ENCODE measurements at regions of chr4 and their contacts with region 1.

Region 1: DNA sequence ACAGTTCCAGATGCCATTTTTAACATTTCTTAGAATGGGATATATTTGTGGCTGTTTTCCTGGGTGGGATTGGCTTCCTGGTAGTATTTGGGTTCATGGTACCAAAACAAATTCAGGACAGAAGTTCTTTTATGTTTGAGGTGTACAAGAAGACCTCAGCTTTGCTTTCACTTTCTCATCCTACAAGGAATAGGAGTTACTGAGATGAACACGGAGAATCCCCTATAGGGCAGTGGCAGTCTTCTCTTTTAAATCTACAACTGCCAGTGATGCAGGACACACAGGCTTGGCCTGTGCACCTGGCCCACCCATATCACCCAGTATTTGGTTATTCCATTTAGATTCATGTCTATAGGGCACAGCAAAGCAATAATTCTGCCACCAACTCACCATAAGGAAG is 35.2 kb downstream of the SLC10A7 start:
- DNase-seq: peak; percentile 34
- CTCF ChIP-seq: no peak

Region 2: GRCh38 chr4:146349306-146349705 is 137.3 kb before region 1 on chr4:
- CTCF ChIA-PET with region 1: no interaction called
- POLR2A ChIA-PET with region 1: no interaction called
- DNase-seq: no peak
- CTCF ChIP-seq: no peak

Region 3: GRCh38 chr4:146465628-146466027 is 20.9 kb before region 1 on chr4:
- CTCF ChIA-PET with region 1: interaction called, 10 read pairs
- POLR2A ChIA-PET with region 1: no interaction called
- DNase-seq: no peak
- CTCF ChIP-seq: no peak

Region 4: DNA sequence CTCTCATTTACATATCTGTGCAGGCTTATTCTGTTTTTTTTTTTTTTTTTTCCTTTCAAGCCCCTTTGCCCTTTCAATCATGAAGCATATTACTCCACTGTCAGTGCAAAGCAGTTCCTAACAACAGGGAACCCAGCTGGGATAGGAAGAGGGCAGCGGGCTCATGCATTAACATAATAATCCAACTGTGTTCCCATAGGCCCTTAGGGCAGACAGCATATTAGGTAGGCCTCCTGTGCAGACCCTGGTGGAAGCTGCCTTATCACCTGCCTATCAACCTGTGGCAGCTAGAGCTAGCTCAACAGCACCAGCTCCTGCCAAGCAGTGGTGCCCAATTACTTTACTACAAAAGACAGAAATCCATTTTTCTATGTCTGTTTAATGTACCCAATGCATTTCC is 14.2 kb before region 1 on chr4:
- CTCF ChIA-PET with region 1: interaction called, 10 read pairs
- POLR2A ChIA-PET with region 1: no interaction called
- DNase-seq: no peak
- CTCF ChIP-seq: no peak

Region 5: GRCh38 chr4:146582864-146583263 is 96.3 kb after region 1 on chr4:
- CTCF ChIA-PET with region 1: no interaction called
- POLR2A ChIA-PET with region 1: no interaction called
- DNase-seq: no peak
- CTCF ChIP-seq: no peak

Measured in GM10248 (cell line).